ENCODE measurements at regions of chr2 and their contacts with region 1.

Region 1: GRCh38 chr2:52510432-52510831 is 1257.2 kb upstream of the CHAC2 start:
- DNase-seq: no peak
- ATAC-seq: no peak
- H3K4me3 ChIP-seq: no peak overlapping the region
- H3K27ac ChIP-seq: no peak overlapping the region
- H3K4me1 ChIP-seq: no peaks in the 10 kb centered on the region
- H3K27me3 ChIP-seq: no peaks in the 10 kb centered on the region
- CTCF ChIP-seq: no peak
- POLR2A ChIP-seq: no peak

Region 2: DNA sequence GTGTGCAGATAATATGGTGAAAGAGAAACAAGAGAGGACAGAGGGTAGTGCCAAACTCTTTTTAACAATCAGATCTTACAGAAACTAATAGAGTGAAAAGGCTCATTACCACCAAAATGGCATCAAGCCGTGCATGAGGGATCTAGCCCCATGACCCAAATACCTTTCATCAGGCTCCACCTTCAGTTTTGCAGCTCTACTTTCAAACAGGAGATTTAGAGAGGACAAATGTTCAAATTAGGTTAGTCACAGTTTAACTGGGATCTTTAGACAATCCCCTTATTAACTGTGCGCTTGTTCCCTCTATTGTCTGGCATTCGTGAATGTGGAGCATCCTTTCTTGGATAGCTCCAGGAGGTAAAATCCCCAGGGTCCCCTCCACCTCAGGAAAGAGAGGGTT is 47.8 kb after region 1 on chr2:
- in situ Hi-C with region 1: loop called in 1 of 4 experiments (anchors 10 kb)
- intact Hi-C with region 1: no loop called
- DNase-seq: no peak
- ATAC-seq: no peak
- H3K4me3 ChIP-seq: no peak overlapping the region
- H3K27ac ChIP-seq: no peak overlapping the region
- H3K4me1 ChIP-seq: no peaks in the 10 kb centered on the region
- H3K27me3 ChIP-seq: no peaks in the 10 kb centered on the region
- CTCF ChIP-seq: no peak
- POLR2A ChIP-seq: no peak

Region 3: DNA sequence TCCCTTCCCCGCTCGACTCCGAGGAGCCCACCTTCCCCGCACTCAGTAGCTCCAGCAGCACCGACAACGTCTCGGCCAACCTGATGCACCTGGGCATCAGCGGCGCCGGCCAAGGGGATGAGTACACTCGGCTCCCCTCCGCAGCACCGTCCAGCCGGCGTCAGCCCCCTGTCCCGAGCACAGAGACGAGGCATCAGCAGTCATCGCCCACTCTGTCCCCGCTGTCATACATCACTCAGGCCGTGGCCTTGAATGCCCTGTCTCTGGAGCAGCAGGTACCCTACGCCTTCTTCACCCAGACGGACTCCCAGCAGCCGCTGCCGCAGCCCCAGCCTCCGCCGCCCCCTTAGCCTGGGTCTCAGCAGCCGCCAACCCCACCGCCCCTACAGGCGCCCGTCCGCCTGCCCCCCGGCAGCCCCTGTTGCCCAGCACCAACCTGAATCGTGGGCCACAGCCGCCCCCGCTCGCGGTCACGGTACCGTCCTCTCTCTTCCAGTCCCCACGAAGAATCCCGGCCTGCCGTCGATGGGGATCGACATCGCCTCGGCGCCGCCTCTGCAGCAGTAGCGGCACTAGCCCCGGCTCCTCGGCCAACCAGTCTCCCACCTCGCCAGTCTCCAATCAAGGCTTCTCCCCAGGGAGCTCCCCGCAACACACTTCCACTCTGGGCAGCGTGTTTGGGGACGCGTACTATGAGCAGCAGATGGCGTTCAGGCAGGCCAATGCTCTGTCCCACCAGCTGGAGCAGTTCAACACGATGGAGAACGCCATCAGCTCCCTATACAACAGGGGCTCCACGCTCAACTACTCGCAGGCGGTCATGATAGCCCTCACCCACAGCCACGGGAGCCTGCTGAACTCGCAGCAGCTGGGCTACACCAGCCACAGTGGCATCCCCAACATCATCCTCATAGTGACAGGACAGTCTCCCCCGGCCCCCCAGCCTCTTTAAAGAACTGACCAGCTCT is 61.2 kb after region 1 on chr2:
- in situ Hi-C with region 1: loop called in 2 of 4 experiments (anchors 5 to 10 kb)
- intact Hi-C with region 1: no loop called
- DNase-seq: no peak
- ATAC-seq: no peak
- H3K4me3 ChIP-seq: no peak overlapping the region
- H3K27ac ChIP-seq: no peak overlapping the region
- H3K4me1 ChIP-seq: no peaks in the 10 kb centered on the region
- H3K27me3 ChIP-seq: no peaks in the 10 kb centered on the region
- CTCF ChIP-seq: no peak
- POLR2A ChIP-seq: no peak

Region 4: DNA sequence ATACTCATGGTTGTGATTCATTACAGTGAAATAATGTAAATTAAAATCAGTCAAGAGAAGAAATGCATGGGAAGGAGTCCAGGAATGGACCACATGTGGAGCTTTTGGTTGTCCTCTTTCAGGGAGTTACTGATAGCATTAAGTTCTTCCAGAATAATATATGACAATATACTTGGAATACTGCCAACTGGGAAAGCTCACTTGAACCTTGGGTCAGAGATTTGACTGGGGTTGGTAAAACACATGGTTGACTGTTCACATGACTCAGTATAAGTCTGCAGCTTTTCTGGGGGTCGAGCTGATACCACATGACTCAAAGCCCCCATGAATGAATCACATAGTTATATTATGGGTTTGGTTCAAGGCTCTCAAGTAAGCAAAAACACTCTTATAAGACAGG is 148.2 kb after region 1 on chr2:
- in situ Hi-C with region 1: no loop called
- intact Hi-C with region 1: no loop called
- DNase-seq: no peak
- ATAC-seq: no peak
- H3K4me3 ChIP-seq: no peak overlapping the region
- H3K27ac ChIP-seq: no peak overlapping the region
- H3K4me1 ChIP-seq: no peaks in the 10 kb centered on the region
- H3K27me3 ChIP-seq: no peaks in the 10 kb centered on the region
- CTCF ChIP-seq: no peak
- POLR2A ChIP-seq: no peak